Prostate gland (tissue), 2 donors: ENCODE measurements at regions of chr2 and their contacts with region 1.

Region 1: DNA sequence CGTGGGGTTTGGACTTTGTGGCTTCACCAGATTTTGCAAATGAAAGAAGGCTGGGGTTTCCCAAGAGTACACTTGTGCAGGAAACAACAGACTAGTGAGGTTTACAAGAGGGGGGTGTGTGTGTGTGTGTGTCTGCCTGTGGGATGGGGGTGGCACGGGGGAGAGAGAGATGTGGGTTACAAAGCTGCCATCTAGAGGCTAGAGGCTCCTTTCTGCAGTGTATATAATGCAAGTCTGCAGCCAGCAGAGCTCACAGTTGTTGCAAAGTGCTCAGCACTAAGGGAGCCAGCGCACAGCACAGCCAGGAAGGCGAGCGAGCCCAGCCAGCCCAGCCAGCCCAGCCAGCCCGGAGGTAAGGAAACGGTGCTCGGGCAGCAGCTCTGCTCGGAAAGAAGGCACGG is at the start of gene ACKR3:
- DNase-seq: peak; percentile 78
- H3K4me3 ChIP-seq: peak within 1 kb of the TSS; percentile 4 to 28
- H3K27ac ChIP-seq: peak within 1 kb of the TSS; percentile 36 to 67
- H3K4me1 ChIP-seq: no peaks in the 10 kb centered on the region
- H3K27me3 ChIP-seq: peaks cover 2% of the 10 kb centered on the region
- CTCF ChIP-seq: peak in 3 of 4 experiments; percentile 37 to 68 (median 52)
- POLR2A ChIP-seq: peak; percentile 38
- total RNA-seq, gene ACKR3: 2.1 to 19.2 TPM

Region 2: GRCh38 chr2:236352761-236353593 is 216.6 kb before region 1 on chr2:
- intact Hi-C with region 1: loop called (anchors 5 kb)
- DNase-seq: no peak
- H3K4me3 ChIP-seq: no peak overlapping the region
- H3K27ac ChIP-seq: no peak overlapping the region
- H3K4me1 ChIP-seq: no peaks in the 10 kb centered on the region
- H3K27me3 ChIP-seq: no peaks in the 10 kb centered on the region
- CTCF ChIP-seq: peak; percentile 71 to 81 (median 78)
- POLR2A ChIP-seq: no peak

Region 3: GRCh38 chr2:236512902-236513435 is 56.6 kb before region 1 on chr2:
- intact Hi-C with region 1: loop called (anchors 5 kb)
- DNase-seq: peak; percentile 51
- H3K4me3 ChIP-seq: no peak overlapping the region
- H3K27ac ChIP-seq: no peak overlapping the region
- H3K4me1 ChIP-seq: no peaks in the 10 kb centered on the region
- H3K27me3 ChIP-seq: no peaks in the 10 kb centered on the region
- CTCF ChIP-seq: peak; percentile 51 to 88 (median 82)
- POLR2A ChIP-seq: no peak

Region 4: DNA sequence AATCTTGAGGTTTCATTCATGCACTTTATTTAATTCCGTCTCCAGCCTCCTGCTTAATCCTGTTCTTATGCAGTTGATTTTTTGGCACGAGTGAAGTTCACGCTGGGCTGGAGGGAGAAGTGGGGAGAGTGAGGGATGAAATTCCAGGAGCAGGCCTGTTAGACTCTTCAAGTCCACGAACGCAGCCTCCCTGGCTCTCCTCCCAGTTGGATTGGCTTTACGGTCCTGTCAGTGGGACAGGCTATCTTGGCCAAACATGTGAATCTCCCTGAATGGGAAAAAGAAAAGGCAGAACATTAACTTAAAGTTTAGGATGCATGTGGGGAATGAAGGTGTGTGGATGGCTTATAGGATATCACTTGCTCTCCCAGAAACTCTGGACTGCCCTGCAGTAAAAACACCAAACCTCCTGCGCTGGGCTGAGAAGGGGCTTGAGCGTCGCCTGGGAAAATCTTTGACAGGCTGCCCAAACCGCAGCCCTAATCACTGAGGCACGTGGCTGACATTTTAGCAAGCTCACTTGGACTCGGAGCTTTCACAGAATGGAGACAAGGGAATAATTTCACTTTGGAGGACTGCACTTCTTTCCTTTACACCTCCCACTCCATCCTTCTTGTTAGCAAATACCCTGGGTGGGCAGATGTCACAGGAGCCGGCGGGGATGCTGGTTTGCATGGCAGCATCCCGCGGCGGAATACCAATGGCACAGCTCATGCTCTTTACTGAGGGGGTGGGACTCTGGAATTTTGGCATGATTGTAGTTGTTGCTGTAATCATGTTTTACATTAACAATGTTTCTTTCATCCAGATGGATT is 93.9 kb after region 1 on chr2:
- intact Hi-C with region 1: loop called (anchors 5 kb)
- DNase-seq: no peak
- H3K4me3 ChIP-seq: no peak overlapping the region
- H3K27ac ChIP-seq: peak overlapping the region in 1 of 2 donors; percentile 30
- H3K4me1 ChIP-seq: no peaks in the 10 kb centered on the region
- H3K27me3 ChIP-seq: no peaks in the 10 kb centered on the region
- CTCF ChIP-seq: no peak
- POLR2A ChIP-seq: no peak

Region 5: DNA sequence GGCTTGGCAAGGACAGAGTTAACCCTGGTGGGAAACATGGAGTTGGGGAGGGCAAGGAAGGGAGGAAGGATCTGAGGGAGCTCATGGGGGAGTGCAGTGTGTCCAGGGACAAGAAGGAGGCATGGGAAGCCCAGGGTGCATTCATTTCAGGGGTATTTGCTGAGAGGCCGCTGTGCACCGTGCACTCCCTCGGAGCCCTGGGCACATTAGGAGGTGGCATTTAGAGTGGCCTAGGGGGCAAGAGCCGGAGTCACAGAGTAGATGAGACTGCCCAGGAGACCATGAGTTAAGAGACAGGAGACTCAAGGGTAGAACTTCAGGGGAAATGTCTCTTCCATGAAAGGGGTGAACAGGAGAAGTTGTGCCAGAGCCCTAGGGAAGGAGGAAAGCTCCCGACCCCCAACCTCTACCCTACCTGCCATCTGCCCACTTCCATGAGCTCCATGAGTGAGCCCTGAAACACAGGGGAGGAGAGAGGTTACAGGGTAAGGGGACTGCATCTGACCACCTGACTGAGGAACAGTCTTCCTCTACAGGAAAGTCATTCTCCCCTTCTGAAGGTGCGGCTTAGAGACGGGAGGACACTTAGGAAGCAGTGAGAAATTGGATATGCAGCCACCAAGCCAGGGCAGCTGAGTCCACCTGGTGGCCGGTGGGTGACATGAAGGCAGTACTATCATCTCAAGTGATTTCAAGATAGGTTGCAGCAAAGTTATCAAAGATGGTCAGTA is 457.6 kb after region 1 on chr2:
- intact Hi-C with region 1: loop called (anchors 5 kb)
- DNase-seq: peak; percentile 72
- H3K4me3 ChIP-seq: no peak overlapping the region
- H3K27ac ChIP-seq: no peak overlapping the region
- H3K4me1 ChIP-seq: no peaks in the 10 kb centered on the region
- H3K27me3 ChIP-seq: no peaks in the 10 kb centered on the region
- CTCF ChIP-seq: peak; percentile 82 to 95 (median 93)
- POLR2A ChIP-seq: no peak